IMR-90 (cell line): ENCODE measurements at regions of chr1 and their contacts with region 1.

Region 1: GRCh38 chr1:94541175-94542087 is at the start of gene F3:
- DNase-seq: peak; percentile 91
- ATAC-seq: peak; percentile 77
- H3K4me3 ChIP-seq: peak within 1 kb of the TSS; percentile 92
- H3K27ac ChIP-seq: peak within 1 kb of the TSS; percentile 95
- H3K4me1 ChIP-seq: peaks cover 7% of the 10 kb centered on the region
- H3K27me3 ChIP-seq: no peaks in the 10 kb centered on the region
- CTCF ChIP-seq: peak; percentile 28; the same call in 1 of the 2 replicates
- POLR2A ChIP-seq: peak; percentile 95
- RAD21 ChIP-seq: peak; percentile 25; the same call in 1 of the 2 replicates
- total RNA-seq, gene F3: 75.6 and 102 TPM in 2 replicates

Region 2: GRCh38 chr1:94039514-94039870 is 501.9 kb before region 1 on chr1:
- CTCF ChIA-PET with region 1: no interaction called
- POLR2A ChIA-PET with region 1: no interaction called
- dilution Hi-C with region 1: no loop called
- in situ Hi-C with region 1: no loop called
- intact Hi-C with region 1: no loop called
- DNase-seq: peak; percentile 62
- ATAC-seq: peak; percentile 22; the same call in 1 of the 2 replicates
- H3K4me3 ChIP-seq: no peak overlapping the region
- H3K27ac ChIP-seq: no peak overlapping the region
- H3K4me1 ChIP-seq: peaks cover 28% of the 10 kb centered on the region
- H3K27me3 ChIP-seq: no peaks in the 10 kb centered on the region
- CTCF ChIP-seq: peak; percentile 71
- POLR2A ChIP-seq: no peak
- RAD21 ChIP-seq: peak; percentile 59

Region 3: GRCh38 chr1:94475232-94475631 is 66.2 kb before region 1 on chr1:
- CTCF ChIA-PET with region 1: no interaction called
- POLR2A ChIA-PET with region 1: no interaction called
- dilution Hi-C with region 1: no loop called
- in situ Hi-C with region 1: no loop called
- intact Hi-C with region 1: no loop called
- DNase-seq: no peak
- ATAC-seq: no peak
- H3K4me3 ChIP-seq: no peak overlapping the region
- H3K27ac ChIP-seq: no peak overlapping the region
- H3K4me1 ChIP-seq: no peaks in the 10 kb centered on the region
- H3K27me3 ChIP-seq: no peaks in the 10 kb centered on the region
- CTCF ChIP-seq: no peak
- POLR2A ChIP-seq: no peak
- RAD21 ChIP-seq: no peak

Region 4: GRCh38 chr1:94504601-94505000 is 36.8 kb before region 1 on chr1:
- CTCF ChIA-PET with region 1: no interaction called
- POLR2A ChIA-PET with region 1: no interaction called
- dilution Hi-C with region 1: no loop called
- in situ Hi-C with region 1: no loop called
- intact Hi-C with region 1: no loop called
- DNase-seq: no peak
- ATAC-seq: no peak
- H3K4me3 ChIP-seq: no peak overlapping the region
- H3K27ac ChIP-seq: no peak overlapping the region
- H3K4me1 ChIP-seq: no peaks in the 10 kb centered on the region
- H3K27me3 ChIP-seq: no peaks in the 10 kb centered on the region
- CTCF ChIP-seq: no peak
- POLR2A ChIP-seq: no peak
- RAD21 ChIP-seq: no peak

Region 5: GRCh38 chr1:94562519-94563260 is 21.3 kb after region 1 on chr1:
- CTCF ChIA-PET with region 1: no interaction called
- POLR2A ChIA-PET with region 1: interaction called, 15 read pairs
- dilution Hi-C with region 1: no loop called
- in situ Hi-C with region 1: no loop called
- intact Hi-C with region 1: no loop called
- DNase-seq: no peak
- ATAC-seq: peak; percentile 27
- H3K4me3 ChIP-seq: no peak overlapping the region
- H3K27ac ChIP-seq: 0 out of 2 replicates have a peak overlapping the region, but pooled peaks have one; percentile 20
- H3K4me1 ChIP-seq: peaks cover 22% of the 10 kb centered on the region
- H3K27me3 ChIP-seq: no peaks in the 10 kb centered on the region
- CTCF ChIP-seq: no peak
- POLR2A ChIP-seq: no peak
- RAD21 ChIP-seq: no peak

Region 6: DNA sequence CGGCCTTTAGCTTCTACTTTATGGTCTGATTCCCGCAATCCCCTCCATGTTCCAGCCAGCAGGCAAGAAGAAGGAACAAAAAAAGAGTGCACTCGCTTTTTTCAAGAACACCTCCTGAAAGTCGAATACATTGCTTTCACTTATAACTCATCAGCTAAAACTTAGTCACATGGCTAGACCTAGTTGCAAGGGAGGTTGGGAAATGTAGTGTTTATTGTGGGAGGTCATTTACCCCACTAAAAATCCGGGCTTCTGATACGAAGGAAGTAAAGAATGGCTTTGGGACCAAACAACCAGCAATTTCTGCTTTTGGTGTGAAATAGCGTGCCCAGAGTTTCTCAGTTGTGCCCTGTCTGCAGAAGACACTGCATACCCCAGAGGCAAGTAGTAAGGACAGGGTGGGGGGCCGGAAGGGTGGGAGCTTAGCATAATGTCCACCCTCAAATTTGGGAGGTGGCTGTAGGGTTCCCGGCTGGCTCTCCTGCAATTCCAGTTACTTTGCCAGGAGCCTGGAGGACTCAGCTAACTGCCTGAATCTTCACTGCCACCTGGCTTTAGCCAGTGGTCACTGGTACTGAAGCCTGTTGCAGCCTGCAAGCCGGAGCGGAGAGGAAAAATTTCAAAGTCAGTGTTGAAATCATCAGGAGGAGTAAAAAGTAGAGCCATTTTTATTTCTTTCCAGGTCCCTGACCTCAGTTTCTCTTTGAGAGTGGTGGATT is 57.8 kb after region 1 on chr1:
- CTCF ChIA-PET with region 1: no interaction called
- POLR2A ChIA-PET with region 1: interaction called, 25 read pairs
- dilution Hi-C with region 1: no loop called
- in situ Hi-C with region 1: no loop called
- intact Hi-C with region 1: loop called (anchors 1 kb)
- DNase-seq: peak; percentile 51
- ATAC-seq: peak; percentile 42
- H3K4me3 ChIP-seq: no peak overlapping the region
- H3K27ac ChIP-seq: no peak overlapping the region
- H3K4me1 ChIP-seq: peaks cover 14% of the 10 kb centered on the region
- H3K27me3 ChIP-seq: peaks cover 3% of the 10 kb centered on the region
- CTCF ChIP-seq: peak; percentile 54
- POLR2A ChIP-seq: no peak
- RAD21 ChIP-seq: peak; percentile 67

Region 7: GRCh38 chr1:94648225-94649007 is 107.0 kb after region 1 on chr1:
- CTCF ChIA-PET with region 1: no interaction called
- POLR2A ChIA-PET with region 1: interaction called, 15 read pairs
- dilution Hi-C with region 1: no loop called
- in situ Hi-C with region 1: no loop called
- intact Hi-C with region 1: loop called (anchors 1 kb)
- DNase-seq: peak; percentile 100
- ATAC-seq: peak; percentile 77
- H3K4me3 ChIP-seq: no peak overlapping the region
- H3K27ac ChIP-seq: peak overlapping the region; percentile 99
- H3K4me1 ChIP-seq: peaks cover 25% of the 10 kb centered on the region
- H3K27me3 ChIP-seq: no peaks in the 10 kb centered on the region
- CTCF ChIP-seq: no peak
- POLR2A ChIP-seq: no peak
- RAD21 ChIP-seq: peak; percentile 12; the same call in 1 of the 2 replicates

Region 8: DNA sequence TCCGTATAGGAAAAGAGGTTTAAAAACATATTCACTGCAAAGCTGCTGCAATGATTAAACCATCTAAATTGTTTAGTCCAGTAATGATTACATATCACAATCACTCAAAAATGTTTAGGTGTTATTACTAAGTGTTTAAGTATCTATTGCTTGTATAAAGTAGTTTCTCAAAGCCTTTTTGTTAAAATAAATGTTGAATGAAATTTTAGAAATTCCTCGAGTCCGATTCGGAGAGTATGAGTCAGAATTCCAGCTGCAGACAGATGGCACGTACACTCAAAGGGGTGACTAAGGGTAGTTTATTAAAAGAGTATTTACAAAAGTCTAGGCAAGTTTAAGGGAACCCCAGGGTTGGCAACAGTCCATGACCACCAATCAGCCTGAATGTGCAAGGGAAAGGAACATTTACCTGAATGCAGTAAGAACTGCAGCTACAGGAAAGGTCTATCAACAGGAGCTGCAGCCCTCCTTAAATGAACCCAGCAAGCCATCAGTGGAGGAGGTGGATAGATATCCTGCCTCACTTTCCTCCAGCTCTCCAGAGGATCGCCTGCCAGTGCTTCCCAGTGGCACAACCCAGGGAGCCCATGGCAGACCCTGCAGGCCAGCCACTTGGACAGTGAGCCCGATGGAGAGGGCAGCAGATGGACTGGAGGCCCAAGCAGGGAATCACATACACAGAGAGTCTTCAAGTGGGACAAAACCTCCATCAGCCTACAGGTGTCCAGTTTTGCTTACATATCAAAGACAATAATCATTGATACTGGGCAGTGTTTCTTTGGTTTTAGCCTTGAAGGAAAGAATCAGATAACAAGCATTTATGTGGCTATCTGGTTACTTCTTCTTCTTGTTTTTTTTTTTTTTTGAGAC is 186.7 kb after region 1 on chr1:
- CTCF ChIA-PET with region 1: no interaction called
- POLR2A ChIA-PET with region 1: interaction called, 15 read pairs
- dilution Hi-C with region 1: no loop called
- in situ Hi-C with region 1: no loop called
- intact Hi-C with region 1: loop called (anchors 2 kb)
- DNase-seq: peak; percentile 99
- ATAC-seq: peak; percentile 59
- H3K4me3 ChIP-seq: no peak overlapping the region
- H3K27ac ChIP-seq: peak overlapping the region; percentile 95
- H3K4me1 ChIP-seq: peaks cover 35% of the 10 kb centered on the region
- H3K27me3 ChIP-seq: no peaks in the 10 kb centered on the region
- CTCF ChIP-seq: no peak
- POLR2A ChIP-seq: no peak
- RAD21 ChIP-seq: peak; percentile 16; the same call in 1 of the 2 replicates

Region 9: GRCh38 chr1:94801919-94802546 is 260.6 kb after region 1 on chr1:
- CTCF ChIA-PET with region 1: interaction called, 3 read pairs
- POLR2A ChIA-PET with region 1: interaction called, 6 read pairs
- dilution Hi-C with region 1: loop called (anchors 25 kb)
- in situ Hi-C with region 1: no loop called
- intact Hi-C with region 1: loop called (anchors 1 kb)
- DNase-seq: peak; percentile 94
- ATAC-seq: peak; percentile 76
- H3K4me3 ChIP-seq: peak overlapping the region; percentile 13; the same call in 1 of the 2 replicates
- H3K27ac ChIP-seq: peak overlapping the region; percentile 90
- H3K4me1 ChIP-seq: peaks cover 14% of the 10 kb centered on the region
- H3K27me3 ChIP-seq: no peaks in the 10 kb centered on the region
- CTCF ChIP-seq: peak; percentile 88
- POLR2A ChIP-seq: 0 out of 2 replicates have a peak, but pooled peaks have one; percentile 40
- RAD21 ChIP-seq: peak; percentile 95

Region 10: GRCh38 chr1:94884106-94884505 is 342.7 kb after region 1 on chr1:
- CTCF ChIA-PET with region 1: no interaction called
- POLR2A ChIA-PET with region 1: no interaction called
- dilution Hi-C with region 1: no loop called
- in situ Hi-C with region 1: no loop called
- intact Hi-C with region 1: no loop called
- DNase-seq: peak; percentile 76
- ATAC-seq: peak; percentile 90
- H3K4me3 ChIP-seq: no peak overlapping the region
- H3K27ac ChIP-seq: peak overlapping the region; percentile 89
- H3K4me1 ChIP-seq: peaks cover 8% of the 10 kb centered on the region
- H3K27me3 ChIP-seq: no peaks in the 10 kb centered on the region
- CTCF ChIP-seq: no peak
- POLR2A ChIP-seq: no peak
- RAD21 ChIP-seq: no peak